Upper lobe of right lung (tissue), 1 donor: ENCODE measurements at regions of chr4 and their contacts with region 1.

Region 1: DNA sequence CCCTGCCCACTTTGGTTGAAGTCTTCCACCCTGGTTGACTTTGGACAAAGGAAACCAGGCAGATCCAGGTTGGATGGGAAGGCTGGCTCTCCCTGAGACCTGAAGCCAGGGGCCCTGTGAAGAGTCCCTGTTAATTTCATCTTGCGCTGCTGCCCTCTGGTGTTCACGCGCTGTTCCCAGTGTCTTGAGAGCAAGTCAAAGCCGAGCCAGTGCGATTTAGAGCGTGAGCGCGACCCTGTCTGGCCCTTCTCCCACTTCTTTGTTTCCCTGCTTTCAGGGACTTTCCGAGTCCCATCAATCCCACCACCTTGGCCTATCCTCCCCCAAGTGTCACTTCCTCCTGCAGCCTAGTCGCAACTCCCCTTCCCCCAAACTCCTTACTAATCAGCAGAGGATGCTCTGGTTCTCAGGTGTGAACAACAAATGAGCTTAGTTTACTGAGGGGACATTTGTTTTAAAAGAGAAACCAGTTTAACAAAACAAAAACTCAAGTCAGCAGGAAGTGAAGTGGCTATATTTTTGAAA is 25.8 kb upstream of the CHRNA9 start:
- DNase-seq: peak; percentile 93
- ATAC-seq: peak; percentile 92
- H3K4me3 ChIP-seq: no peak overlapping the region
- H3K27ac ChIP-seq: no peak overlapping the region
- H3K4me1 ChIP-seq: peaks cover 18% of the 10 kb centered on the region
- H3K27me3 ChIP-seq: no peaks in the 10 kb centered on the region
- CTCF ChIP-seq: peak; percentile 90

Region 2: GRCh38 chr4:40056716-40057585 is 252.4 kb before region 1 on chr4 and contains the start of gene N4BP2:
- intact Hi-C with region 1: loop called (anchors 5 kb)
- DNase-seq: peak; percentile 95
- ATAC-seq: peak; percentile 81
- H3K4me3 ChIP-seq: peak within 1 kb of the TSS; percentile 85
- H3K27ac ChIP-seq: peak within 1 kb of the TSS; percentile 100
- H3K4me1 ChIP-seq: peaks cover 18% of the 10 kb centered on the region
- H3K27me3 ChIP-seq: no peaks in the 10 kb centered on the region
- CTCF ChIP-seq: peak; percentile 63
- total RNA-seq, gene N4BP2: 9.8 TPM

Region 3: DNA sequence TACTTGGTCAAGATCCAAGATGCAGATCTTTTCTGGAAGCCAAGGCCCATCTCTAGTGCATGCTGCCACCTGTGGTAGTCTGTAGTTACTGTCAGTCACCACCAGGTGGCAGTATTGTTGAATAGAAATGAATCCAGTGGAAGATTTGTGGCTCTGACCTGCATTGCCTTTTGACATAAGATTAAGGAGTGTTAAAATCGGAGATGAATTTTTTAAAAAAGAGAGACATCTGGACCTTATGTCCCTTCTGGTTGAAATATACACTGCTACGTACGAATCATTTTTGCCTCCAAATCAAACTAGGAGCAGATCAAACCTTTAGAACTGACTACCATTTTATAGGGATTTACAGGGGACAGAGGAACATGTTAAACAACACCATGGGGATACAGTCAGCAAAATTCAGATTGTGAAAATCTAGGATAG is 159.3 kb before region 1 on chr4:
- intact Hi-C with region 1: loop called (anchors 10 kb)
- DNase-seq: no peak
- ATAC-seq: peak; percentile 98
- H3K4me3 ChIP-seq: no peak overlapping the region
- H3K27ac ChIP-seq: no peak overlapping the region
- H3K4me1 ChIP-seq: no peaks in the 10 kb centered on the region
- H3K27me3 ChIP-seq: no peaks in the 10 kb centered on the region
- CTCF ChIP-seq: peak; percentile 94

Region 4: GRCh38 chr4:40502934-40503333 is 193.6 kb after region 1 on chr4:
- intact Hi-C with region 1: no loop called
- DNase-seq: no peak
- ATAC-seq: peak; percentile 29
- H3K4me3 ChIP-seq: no peak overlapping the region
- H3K27ac ChIP-seq: no peak overlapping the region
- H3K4me1 ChIP-seq: no peaks in the 10 kb centered on the region
- H3K27me3 ChIP-seq: no peaks in the 10 kb centered on the region
- CTCF ChIP-seq: no peak